Pancreas (tissue), 10 donors: ENCODE measurements at regions of chr1 and their contacts with region 1.

Region 1: GRCh38 chr1:156146020-156146768 is 7.2 kb upstream of the SEMA4A start:
- DNase-seq: peak in 3 of 6 donors; percentile 54 to 77 (median 70)
- ATAC-seq: peak; percentile 53 to 89 (median 80)
- H3K4me3 ChIP-seq: no peak overlapping the region
- H3K27ac ChIP-seq: no peak overlapping the region
- H3K4me1 ChIP-seq: peaks cover 0 to 2% (median 0%) of the 10 kb centered on the region in 3 donors
- H3K27me3 ChIP-seq: no peaks in the 10 kb centered on the region
- CTCF ChIP-seq: peak; percentile 37 to 56 (median 48)

Region 2: DNA sequence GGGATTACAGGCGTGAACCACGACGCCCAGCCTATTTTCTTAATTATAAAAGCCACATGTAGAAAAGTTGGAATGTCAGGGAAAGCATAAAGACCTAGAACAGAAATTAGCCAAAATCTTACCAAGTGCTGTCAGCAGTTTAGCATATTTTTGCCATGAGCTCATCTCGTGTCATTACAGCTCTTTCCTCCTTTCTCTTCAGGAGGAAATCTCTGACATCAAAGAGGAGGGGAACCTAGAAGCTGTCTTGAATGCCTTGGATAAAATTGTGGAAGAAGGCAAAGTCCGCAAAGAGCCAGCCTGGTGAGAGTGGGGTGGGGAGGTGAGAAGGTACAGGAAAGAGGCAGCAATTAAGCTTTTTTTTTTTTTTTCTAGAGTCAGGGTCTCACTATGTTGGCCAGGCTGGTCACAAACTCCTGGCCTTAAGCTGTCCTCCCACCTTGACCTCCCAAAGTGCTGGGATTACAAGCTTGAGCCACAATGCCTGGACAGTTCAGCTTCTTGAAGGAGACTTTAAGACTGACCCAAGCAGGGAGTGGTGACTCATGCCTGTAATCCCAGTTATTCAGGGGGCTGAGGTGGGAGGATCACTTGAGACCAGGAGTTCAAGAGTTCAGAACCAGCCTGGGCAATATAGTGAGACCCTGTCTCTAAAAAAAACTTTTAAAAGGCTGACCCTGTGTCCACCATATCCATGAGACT is 87.4 kb after region 1 on chr1:
- intact Hi-C with region 1: loop called in 1 of 3 experiments (anchors 10 kb)
- DNase-seq: no peak
- ATAC-seq: no peak
- H3K4me3 ChIP-seq: no peak overlapping the region
- H3K27ac ChIP-seq: no peak overlapping the region
- H3K4me1 ChIP-seq: no peaks in the 10 kb centered on the region
- H3K27me3 ChIP-seq: no peaks in the 10 kb centered on the region
- CTCF ChIP-seq: no peak

Region 3: DNA sequence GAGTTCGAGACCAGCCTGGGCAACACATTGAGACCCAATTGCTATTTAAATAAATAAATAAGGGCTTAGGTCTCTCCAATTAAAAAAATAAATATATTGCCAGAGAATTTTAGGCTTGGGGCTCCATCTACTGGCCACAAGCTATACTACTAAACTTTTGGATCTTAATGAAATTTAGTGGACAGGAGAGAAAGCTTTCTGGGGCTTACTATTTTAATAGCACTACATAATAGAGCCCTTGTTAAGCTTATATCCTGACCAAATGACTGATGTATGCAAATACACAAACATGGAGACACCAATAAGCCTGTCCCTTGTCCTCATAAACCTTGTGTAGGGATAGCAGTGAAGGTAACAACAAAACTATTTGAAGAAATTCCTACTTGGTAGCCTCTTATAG is 173.5 kb after region 1 on chr1:
- intact Hi-C with region 1: loop called in 1 of 3 experiments (anchors 10 kb)
- DNase-seq: no peak
- ATAC-seq: peak in 1 of 4 donors; percentile 36
- H3K4me3 ChIP-seq: no peak overlapping the region
- H3K27ac ChIP-seq: no peak overlapping the region
- H3K4me1 ChIP-seq: no peaks in the 10 kb centered on the region
- H3K27me3 ChIP-seq: no peaks in the 10 kb centered on the region
- CTCF ChIP-seq: peak in 2 of 4 donors; percentile 9 to 31